ENCODE measurements at regions of chr1 and their contacts with region 1.

Region 1: GRCh38 chr1:80973106-80973505 is 827.6 kb upstream of the ADGRL2 start:
- DNase-seq: no peak
- CTCF ChIP-seq: no peak

Region 2: DNA sequence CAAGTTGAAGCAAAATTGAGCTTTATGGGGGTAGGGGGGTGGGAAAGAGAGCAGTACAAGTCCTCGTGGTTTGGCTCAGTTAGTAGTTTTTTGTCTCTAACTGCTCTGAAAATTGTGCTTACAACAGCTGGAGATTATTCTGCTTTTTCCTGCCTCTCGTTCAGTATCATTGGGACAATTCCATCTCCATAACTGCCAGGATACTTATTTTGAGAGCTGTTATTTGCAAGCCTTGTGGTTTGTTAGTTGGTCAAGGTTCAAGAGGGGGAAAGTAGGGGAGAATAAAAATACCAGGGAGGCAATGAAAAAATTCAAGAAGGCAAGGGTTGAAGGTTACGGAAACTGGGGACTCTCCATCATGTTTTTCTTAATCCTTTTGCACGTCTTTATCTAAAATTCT is 15.8 kb after region 1 on chr1:
- CTCF ChIA-PET with region 1: interaction called, 11 read pairs
- POLR2A ChIA-PET with region 1: no interaction called
- DNase-seq: no peak
- CTCF ChIP-seq: no peak